ENCODE measurements at regions of chr7 and their contacts with region 1.

Region 1: DNA sequence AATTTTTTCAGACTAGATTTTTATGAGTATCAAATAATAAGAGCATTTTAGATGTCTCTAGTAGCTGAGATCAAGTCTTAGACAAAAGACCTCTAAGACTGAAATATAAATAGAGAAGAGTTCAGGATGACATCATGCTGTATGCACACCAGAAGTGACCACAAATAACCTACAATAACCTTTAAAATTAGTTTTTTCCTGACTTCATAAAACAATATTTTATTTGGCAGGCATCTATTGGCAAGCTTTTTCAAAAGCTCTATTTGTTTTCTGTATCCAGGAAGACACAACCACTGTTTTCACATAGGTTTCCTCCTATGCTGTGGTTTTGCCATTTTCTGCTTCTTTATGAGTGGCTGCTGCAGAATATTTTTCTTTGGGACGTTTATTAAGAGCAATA is 359.1 kb downstream of the CRPPA start:
- DNase-seq: no peak
- ATAC-seq: peak; percentile 69
- H3K4me3 ChIP-seq: no peak overlapping the region
- H3K27ac ChIP-seq: no peak overlapping the region
- H3K4me1 ChIP-seq: peaks cover 0 to 2% of the 10 kb centered on the region in 2 donors
- H3K27me3 ChIP-seq: no peaks in the 10 kb centered on the region

Region 2: GRCh38 chr7:14950013-14950412 is 1112.3 kb before region 1 on chr7:
- intact Hi-C with region 1: no loop called
- DNase-seq: no peak
- ATAC-seq: no peak
- H3K4me3 ChIP-seq: no peak overlapping the region
- H3K27ac ChIP-seq: no peak overlapping the region
- H3K4me1 ChIP-seq: no peaks in the 10 kb centered on the region
- H3K27me3 ChIP-seq: no peaks in the 10 kb centered on the region

Region 3: DNA sequence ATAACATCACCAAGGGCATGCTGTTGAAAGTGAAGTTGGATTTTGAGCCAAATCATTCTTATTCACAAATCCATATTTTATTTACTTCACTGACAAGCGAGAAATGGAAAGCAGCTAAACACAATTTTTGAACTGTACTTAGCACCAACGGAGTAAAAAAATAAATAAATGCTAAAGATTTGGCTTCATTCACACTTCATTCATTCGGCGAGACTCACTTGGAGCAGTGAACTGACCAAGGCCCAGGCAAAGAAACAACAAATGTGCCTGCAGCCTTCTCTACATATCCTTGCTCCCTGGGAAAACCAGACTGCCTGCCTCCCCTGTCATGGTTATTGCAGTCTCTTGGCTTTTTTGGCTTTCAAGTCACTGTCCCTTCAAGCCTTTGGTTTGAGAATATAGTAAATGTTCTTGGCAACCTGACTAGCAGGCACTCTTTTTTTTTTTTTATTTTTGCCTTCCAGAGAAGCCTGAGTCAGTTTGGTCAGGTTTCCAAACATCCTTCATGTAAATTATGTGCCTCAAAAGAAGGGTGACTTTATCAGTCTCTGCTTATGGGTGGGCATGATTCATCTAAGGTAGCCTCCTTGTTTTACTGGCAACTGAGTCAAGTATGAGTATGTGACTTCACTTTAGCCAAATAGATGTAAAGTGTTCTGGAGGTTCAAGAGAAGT is 198.2 kb before region 1 on chr7:
- intact Hi-C with region 1: loop called in 1 of 2 experiments (anchors 10 kb)
- DNase-seq: no peak
- ATAC-seq: peak; percentile 48
- H3K4me3 ChIP-seq: no peak overlapping the region
- H3K27ac ChIP-seq: peak overlapping the region in 1 of 2 donors; percentile 49
- H3K4me1 ChIP-seq: peaks cover 2 to 4% of the 10 kb centered on the region in 2 donors
- H3K27me3 ChIP-seq: no peaks in the 10 kb centered on the region

Region 4: DNA sequence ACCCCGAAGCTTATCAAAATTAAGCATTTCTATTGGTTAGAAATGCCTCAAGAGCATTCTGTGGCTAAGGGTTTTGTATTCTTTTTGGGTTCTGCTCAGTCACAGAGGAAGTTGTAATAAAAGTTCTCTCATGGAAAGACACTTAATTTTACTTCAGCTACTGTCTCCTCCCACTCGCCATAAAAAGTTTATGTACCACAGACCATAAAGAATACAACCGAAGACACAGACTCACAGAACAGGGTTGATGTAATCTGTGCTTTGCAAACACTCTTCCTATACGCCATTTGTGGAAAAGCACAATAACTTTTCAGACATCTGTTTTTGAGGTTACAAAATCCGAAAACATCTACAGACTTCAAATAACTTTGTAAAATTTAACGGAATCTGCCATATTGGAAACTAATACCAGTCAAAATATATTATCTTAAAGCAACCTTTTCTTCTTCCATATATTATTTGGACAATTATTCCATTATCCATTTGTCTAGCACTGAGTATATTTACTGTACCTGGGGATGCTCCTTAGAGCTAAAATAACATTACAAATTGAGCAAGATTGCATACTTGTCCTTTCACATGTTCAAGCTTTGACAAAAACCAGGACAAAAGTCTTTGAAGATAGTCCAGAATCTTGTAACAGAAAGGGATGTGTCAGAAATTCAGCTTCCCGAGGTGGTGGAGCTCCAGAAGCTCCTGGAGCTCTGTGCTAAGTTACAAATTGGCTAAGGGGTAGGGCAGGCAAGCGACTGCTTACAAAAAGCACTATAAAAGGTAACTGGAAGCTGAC is 156.8 kb before region 1 on chr7:
- intact Hi-C with region 1: no loop called
- DNase-seq: no peak
- ATAC-seq: no peak
- H3K4me3 ChIP-seq: no peak overlapping the region
- H3K27ac ChIP-seq: no peak overlapping the region
- H3K4me1 ChIP-seq: no peaks in the 10 kb centered on the region
- H3K27me3 ChIP-seq: no peaks in the 10 kb centered on the region

Region 5: DNA sequence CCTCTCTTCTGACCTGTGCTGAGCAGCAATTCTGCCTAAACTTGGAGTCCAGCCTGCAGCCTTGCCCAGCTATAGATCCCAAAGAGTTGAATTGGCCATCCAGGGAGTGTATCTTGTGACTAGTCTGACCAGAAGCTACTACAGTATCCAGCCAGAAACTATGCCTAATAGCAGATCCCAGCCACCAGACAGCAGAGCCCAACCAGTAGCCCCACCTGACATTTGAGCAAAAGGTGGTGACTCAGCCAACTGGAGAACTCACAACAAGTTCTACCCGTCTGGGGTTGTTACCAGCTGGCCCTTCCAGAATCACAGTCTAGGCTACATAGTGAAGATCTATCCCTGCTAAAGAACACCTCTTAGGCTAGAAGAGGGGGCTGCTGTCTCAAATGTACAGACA is 44.0 kb after region 1 on chr7:
- intact Hi-C with region 1: no loop called
- DNase-seq: no peak
- ATAC-seq: no peak
- H3K4me3 ChIP-seq: no peak overlapping the region
- H3K27ac ChIP-seq: no peak overlapping the region
- H3K4me1 ChIP-seq: no peaks in the 10 kb centered on the region
- H3K27me3 ChIP-seq: no peaks in the 10 kb centered on the region